Vagina (tissue), 2 donors: ENCODE measurements at regions of chr2 and their contacts with region 1.

Region 1: DNA sequence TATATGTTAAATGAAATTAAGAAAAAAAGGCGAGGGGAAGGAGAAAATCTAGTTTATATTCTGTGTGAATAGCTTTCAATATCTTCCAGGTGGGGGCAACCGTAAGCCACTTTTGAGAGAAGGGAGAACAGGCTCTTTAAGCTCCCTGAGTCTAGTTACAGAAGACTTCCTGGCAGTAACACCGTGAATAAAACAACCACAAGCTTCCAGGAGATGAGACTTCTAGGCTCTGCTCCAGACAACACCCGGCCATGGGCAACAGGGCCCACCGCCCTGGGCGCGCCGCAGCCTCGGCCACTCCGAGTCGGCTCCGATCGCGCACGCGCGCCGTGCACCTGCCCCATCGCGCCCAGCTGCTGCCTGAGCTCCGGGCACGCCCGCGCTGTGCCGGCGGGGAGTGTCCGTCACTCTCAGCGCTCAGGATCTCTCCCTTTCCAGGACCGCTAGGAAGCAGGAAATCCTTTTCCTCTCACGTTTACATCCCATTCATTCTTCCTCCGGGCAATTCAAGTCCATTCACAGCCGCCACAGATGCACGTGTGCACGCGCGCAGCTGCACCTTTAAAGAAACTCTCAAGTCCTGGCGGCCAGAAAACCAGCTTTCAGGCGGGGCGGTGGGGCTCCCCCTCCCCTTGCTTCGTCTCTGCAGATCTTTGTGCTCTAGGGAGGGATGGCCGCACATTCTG is 19.4 kb upstream of the PAX3 start:
- DNase-seq: no peak
- H3K4me3 ChIP-seq: peak overlapping the region; percentile 31 to 50
- H3K27ac ChIP-seq: no peak overlapping the region
- H3K4me1 ChIP-seq: peaks cover 23% of the 10 kb centered on the region
- H3K27me3 ChIP-seq: peaks cover 4% of the 10 kb centered on the region
- CTCF ChIP-seq: peak in 2 of 3 experiments; percentile 15 to 31
- POLR2A ChIP-seq: no peak

Region 2: DNA sequence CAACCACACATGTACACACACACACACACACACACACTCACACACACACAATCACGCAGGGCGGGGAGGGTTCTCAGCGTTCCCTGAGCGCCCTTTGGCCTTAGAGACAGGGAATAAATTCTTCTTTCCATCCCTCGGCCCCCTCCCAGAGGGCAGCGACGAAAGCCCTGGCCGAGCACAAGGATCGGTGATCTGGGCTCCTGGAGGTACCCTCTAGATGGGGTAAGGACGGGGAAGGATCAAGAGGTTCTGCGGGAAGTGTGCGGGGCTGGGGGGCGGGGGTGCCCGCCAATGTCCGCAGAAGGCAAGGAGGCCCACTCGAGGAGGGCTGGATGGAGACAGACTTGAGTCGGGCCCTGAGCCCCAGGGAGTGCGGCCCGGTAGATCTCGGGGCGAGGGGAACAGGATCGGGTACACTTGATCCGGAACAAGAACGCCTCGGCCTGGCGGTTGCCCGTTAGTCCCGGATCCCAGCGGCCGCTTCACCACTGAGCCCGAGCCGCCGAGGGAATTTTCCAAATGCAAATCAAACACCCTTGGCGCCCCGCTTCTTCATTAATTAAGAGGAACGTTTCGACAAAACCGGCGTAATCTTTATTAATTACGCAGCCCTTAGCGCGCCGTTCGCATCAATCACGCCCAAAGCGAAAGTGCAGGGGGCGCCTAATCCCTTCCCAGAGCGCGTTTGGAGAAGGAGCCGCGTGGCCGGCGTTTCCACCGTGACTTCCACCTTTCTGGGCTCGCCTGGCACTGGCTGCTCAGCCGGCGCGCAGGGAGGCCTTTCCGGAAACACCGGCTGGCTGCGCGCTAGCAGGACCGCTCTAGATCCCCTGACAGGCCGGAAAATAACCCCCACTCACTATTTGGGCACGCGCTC is 12.4 kb before region 1 on chr2:
- intact Hi-C with region 1: no loop called
- DNase-seq: no peak
- H3K4me3 ChIP-seq: peak overlapping the region; percentile 34 to 50
- H3K27ac ChIP-seq: no peak overlapping the region
- H3K4me1 ChIP-seq: peaks cover 38% of the 10 kb centered on the region
- H3K27me3 ChIP-seq: peaks cover 37% of the 10 kb centered on the region
- CTCF ChIP-seq: no peak
- POLR2A ChIP-seq: no peak

Region 3: GRCh38 chr2:222336439-222336838 is 18.3 kb after region 1 on chr2:
- intact Hi-C with region 1: no loop called
- DNase-seq: no peak
- H3K4me3 ChIP-seq: no peak overlapping the region
- H3K27ac ChIP-seq: no peak overlapping the region
- H3K4me1 ChIP-seq: no peaks in the 10 kb centered on the region
- H3K27me3 ChIP-seq: no peaks in the 10 kb centered on the region
- CTCF ChIP-seq: no peak
- POLR2A ChIP-seq: no peak

Region 4: DNA sequence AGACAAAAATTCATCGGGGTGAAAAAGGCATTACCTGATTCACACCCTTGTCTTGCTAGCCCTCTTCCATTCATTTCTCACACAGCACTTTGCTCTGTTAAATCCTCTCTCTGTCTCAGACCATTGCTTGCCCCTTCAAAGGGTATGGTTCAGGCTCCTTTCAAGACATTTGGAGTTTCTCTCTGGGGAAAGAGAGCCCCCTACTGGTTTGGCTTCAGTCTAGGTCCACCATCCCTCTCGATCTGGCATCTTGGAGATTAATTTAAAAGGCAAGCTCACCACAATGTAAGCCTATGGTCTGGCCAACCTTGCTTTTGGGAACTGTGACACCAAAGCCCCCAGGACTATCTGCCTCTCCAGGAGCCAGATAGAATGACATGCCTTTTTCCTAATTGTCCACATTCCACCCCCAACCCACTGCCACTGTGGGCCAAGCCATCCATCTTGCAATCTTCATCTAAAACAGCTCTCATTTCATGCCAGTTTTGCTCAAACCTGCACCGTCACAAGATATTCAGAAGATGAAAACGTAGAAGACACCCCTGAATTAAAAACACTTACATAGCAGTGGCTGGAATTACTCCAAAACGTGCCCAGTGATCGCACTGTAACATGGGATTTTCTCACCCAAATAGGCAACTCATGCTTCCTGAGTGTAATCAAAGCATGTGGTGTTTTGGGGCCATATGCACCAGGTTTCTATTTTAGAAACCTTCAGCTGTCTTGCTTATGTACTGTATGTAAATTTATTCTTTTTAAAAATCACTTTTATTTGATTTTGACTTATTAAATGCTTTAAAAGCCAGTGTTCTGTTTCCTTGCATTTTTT is 243.9 kb after region 1 on chr2:
- intact Hi-C with region 1: loop called (anchors 10 kb)
- DNase-seq: no peak
- H3K4me3 ChIP-seq: no peak overlapping the region
- H3K27ac ChIP-seq: no peak overlapping the region
- H3K4me1 ChIP-seq: no peaks in the 10 kb centered on the region
- H3K27me3 ChIP-seq: no peaks in the 10 kb centered on the region
- CTCF ChIP-seq: peak in 2 of 3 experiments; percentile 31 to 65
- POLR2A ChIP-seq: no peak

Region 5: DNA sequence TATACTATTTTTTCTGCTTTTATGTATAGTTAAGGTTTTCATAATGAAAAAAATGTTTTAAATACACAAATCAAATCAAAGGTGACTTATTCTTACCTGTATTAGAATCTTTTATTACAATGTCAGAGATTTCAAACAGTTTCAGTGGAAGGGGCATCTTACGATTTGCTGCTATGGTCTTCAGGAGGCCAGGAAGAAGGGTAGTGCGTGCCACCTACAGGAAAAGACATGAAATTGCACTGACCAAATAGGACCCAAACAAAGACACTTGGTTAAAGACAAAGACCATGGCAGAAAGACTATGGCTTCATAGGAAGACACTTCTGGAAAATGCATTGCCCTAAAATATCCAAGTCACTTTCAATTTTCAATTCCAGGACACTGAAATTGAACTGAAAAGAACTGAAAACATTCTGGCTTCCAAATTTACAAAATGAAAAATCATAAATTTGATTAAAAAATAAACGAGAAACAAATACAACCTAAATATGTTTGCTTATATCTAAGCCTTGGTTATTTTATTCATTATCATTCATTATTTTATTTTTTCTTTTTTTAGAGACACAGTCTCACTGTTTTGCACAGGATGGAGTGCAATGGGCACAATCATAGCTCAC is 295.7 kb after region 1 on chr2:
- intact Hi-C with region 1: loop called (anchors 10 kb)
- DNase-seq: no peak
- H3K4me3 ChIP-seq: no peak overlapping the region
- H3K27ac ChIP-seq: no peak overlapping the region
- H3K4me1 ChIP-seq: no peaks in the 10 kb centered on the region
- H3K27me3 ChIP-seq: no peaks in the 10 kb centered on the region
- CTCF ChIP-seq: peak in 1 of 3 experiments; percentile 59
- POLR2A ChIP-seq: no peak